Motor neuron (in vitro differentiated cells): ENCODE measurements at regions of chr3 and their contacts with region 1.

Region 1: GRCh38 chr3:10693460-10693859 is 122.6 kb upstream of the SLC6A11 start:
- ATAC-seq: peak in 1 of 8 experiments; percentile 20
- H3K4me3 ChIP-seq: no peak overlapping the region
- H3K27ac ChIP-seq: no peak overlapping the region
- H3K4me1 ChIP-seq: peaks cover 6 to 17% of the 10 kb centered on the region in 2 donors

Region 2: DNA sequence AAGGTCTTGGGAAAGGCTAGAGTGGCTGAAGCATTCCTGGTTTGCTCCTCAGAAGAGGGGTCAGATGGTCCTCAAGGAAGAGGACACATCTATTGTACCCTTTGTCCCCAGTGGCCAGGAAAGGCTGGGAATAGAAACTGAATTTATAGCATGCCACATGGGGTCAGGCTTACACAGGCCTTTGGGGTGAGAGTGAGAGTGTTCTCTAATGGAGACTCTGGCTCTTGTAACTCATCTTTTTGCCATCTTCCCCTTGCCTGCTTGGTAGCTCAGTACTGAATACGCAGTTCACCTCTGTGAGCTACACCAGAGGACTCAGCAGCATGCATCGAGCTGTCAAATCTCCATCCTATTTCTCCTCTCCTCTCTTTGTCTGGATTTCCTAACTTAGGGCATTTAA is 275.6 kb before region 1 on chr3:
- in situ Hi-C with region 1: loop called in 1 of 9 experiments (anchors 10 kb)
- ATAC-seq: peak in 3 of 8 experiments; percentile 46 to 86 (median 72)
- H3K4me3 ChIP-seq: no peak overlapping the region
- H3K27ac ChIP-seq: no peak overlapping the region
- H3K4me1 ChIP-seq: no peaks in the 10 kb centered on the region

Region 3: DNA sequence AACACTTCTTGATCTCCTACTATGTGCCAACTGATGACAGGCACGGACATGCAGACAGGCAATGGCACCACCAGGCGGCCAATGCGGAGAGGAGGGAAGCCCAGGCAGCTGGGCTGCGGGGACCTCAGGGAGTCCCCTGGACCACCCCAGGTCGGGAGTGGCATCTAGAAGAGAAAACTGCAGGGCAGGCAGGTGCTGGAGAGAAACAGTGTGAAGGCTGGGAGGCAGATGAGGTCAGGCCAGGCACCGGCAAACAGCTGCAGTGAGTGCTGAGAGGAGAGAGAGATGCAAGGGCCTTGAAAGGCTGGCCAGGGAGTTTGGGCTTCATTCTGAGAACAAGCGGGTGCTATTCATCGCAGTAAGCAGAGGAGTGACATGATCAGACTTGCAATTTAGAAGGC is 328.2 kb after region 1 on chr3:
- in situ Hi-C with region 1: no loop called
- ATAC-seq: no peak
- H3K4me3 ChIP-seq: no peak overlapping the region
- H3K27ac ChIP-seq: no peak overlapping the region
- H3K4me1 ChIP-seq: no peaks in the 10 kb centered on the region

Region 4: DNA sequence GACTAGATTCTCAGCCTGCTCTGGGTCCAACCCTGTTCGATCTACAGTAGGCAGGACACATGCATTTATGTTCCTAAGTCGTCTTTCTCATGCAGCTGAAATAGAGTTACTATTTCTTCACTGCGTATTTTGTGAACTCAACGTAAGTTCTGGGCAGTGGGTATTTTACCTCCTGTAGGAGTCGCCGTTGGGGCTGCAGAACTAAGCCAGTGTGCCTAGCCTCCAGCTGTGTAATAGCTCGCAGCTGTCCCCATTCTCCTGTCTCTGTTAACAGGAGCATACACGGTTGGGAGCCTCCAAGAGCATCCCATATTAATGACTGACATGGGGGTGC is 402.4 kb after region 1 on chr3:
- in situ Hi-C with region 1: no loop called
- ATAC-seq: peak in 1 of 8 experiments; percentile 18
- H3K4me3 ChIP-seq: no peak overlapping the region
- H3K27ac ChIP-seq: no peak overlapping the region
- H3K4me1 ChIP-seq: no peaks in the 10 kb centered on the region